HEK293 (cell line): ENCODE measurements at regions of chr17 and their contacts with region 1.

Region 1: GRCh38 chr17:10875979-10876555 is 38.2 kb upstream of the PIRT start:
- H3K4me3 ChIP-seq: no peak overlapping the region
- H3K27ac ChIP-seq: no peak overlapping the region
- H3K4me1 ChIP-seq: no peaks in the 10 kb centered on the region
- CTCF ChIP-seq: 0 out of 2 replicates have a peak, but pooled peaks have one; percentile 26

Region 2: DNA sequence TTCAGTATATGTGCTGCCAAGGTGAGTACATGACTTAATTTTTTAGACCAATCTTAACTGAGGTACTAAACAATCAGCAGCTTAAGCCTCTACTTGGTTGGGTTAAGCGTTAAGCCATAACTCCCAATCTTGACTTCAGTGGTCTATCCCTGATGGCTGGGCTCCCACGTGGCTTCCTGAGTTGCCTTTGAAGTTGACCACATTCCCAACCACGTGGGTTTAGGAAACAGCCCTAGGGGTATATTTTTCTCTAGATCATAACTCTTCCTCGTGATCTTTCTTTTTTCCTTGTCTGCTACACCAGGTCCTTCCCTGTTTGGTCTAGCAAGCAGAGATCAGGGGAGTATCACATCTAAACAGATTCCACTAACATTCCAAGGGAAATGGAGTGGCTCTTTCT is 18.1 kb before region 1 on chr17:
- CTCF ChIA-PET with region 1: interaction called, 11 read pairs
- POLR2A ChIA-PET with region 1: no interaction called
- H3K4me3 ChIP-seq: no peak overlapping the region
- H3K27ac ChIP-seq: no peak overlapping the region
- H3K4me1 ChIP-seq: no peaks in the 10 kb centered on the region
- CTCF ChIP-seq: no peak

Region 3: GRCh38 chr17:10899281-10899680 is 23.2 kb after region 1 on chr17:
- CTCF ChIA-PET with region 1: interaction called, 16 read pairs
- POLR2A ChIA-PET with region 1: no interaction called
- H3K4me3 ChIP-seq: no peak overlapping the region
- H3K27ac ChIP-seq: no peak overlapping the region
- H3K4me1 ChIP-seq: no peaks in the 10 kb centered on the region
- CTCF ChIP-seq: no peak

Region 4: GRCh38 chr17:11144358-11145233 is 268.5 kb after region 1 on chr17:
- CTCF ChIA-PET with region 1: interaction called, 135 read pairs
- POLR2A ChIA-PET with region 1: no interaction called
- H3K4me3 ChIP-seq: no peak overlapping the region
- H3K27ac ChIP-seq: no peak overlapping the region
- H3K4me1 ChIP-seq: no peaks in the 10 kb centered on the region
- CTCF ChIP-seq: peak; percentile 30; the same call in 1 of the 2 replicates

Region 5: DNA sequence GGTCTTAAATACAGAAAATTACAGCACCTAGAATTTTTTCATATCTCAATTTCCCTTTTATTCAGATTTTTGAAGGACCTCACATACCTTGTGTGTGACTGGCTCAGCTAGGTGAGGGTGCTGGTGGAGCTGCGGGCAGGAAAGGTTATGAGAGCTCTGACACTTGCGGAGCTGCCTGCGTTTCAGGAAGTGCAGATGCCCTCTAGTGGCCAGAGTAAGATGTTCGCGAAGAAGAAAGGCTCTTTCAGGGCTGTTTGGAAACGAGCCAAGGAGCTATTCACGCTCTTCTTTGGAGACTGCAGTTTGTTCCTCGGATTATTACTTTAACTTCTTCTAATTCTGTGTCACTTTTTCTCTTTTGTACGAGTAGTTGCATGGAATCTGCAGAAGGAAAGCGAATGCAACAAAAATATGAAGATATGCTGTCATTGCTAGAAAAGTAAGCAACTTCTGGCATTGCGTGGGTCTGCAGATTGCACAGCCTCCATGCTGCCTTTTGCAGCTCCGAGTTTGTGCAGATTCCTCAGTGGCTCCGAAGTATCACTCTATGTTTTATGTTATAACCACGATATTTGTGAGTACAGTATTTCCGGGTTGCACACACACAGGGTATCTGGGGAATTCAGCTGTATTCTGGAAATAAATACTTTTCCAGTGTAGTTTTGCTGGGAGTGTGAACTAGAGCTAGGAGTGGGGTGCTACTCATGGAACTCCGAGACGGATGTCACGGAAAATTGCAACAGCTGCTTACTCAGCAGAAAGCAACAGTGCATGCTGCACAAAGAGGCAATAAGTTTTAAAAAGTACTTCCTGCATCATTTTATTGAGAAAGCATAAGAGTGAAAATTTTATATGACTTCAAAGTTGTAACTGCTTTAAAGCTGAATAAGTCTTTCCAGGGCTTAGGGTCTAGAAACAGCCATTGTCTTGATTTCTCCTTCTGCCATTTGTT is 768.5 kb after region 1 on chr17:
- CTCF ChIA-PET with region 1: interaction called, 14 read pairs
- POLR2A ChIA-PET with region 1: no interaction called
- H3K4me3 ChIP-seq: no peak overlapping the region
- H3K27ac ChIP-seq: no peak overlapping the region
- H3K4me1 ChIP-seq: no peaks in the 10 kb centered on the region
- CTCF ChIP-seq: no peak

Region 6: GRCh38 chr17:11935734-11936406 is 1059.8 kb after region 1 on chr17:
- CTCF ChIA-PET with region 1: interaction called, 46 read pairs
- POLR2A ChIA-PET with region 1: no interaction called
- H3K4me3 ChIP-seq: no peak overlapping the region
- H3K27ac ChIP-seq: no peak overlapping the region
- H3K4me1 ChIP-seq: no peaks in the 10 kb centered on the region
- CTCF ChIP-seq: peak; percentile 21; the same call in 1 of the 2 replicates

Region 7: GRCh38 chr17:11986942-11987329 is 1110.9 kb after region 1 on chr17:
- CTCF ChIA-PET with region 1: interaction called, 12 read pairs
- POLR2A ChIA-PET with region 1: no interaction called
- H3K4me3 ChIP-seq: no peak overlapping the region
- H3K27ac ChIP-seq: no peak overlapping the region
- H3K4me1 ChIP-seq: no peaks in the 10 kb centered on the region
- CTCF ChIP-seq: no peak